ENCODE measurements at regions of chr1 and their contacts with region 1.

Region 1: GRCh38 chr1:3146907-3147306 is 77.9 kb downstream of the PRDM16 start:
- DNase-seq: no peak
- H3K4me3 ChIP-seq: no peak overlapping the region
- H3K27ac ChIP-seq: no peak overlapping the region
- H3K27me3 ChIP-seq: peaks cover 0 to 54% (median 4%) of the 10 kb centered on the region in 45 donors
- CTCF ChIP-seq: no peak

Region 2: DNA sequence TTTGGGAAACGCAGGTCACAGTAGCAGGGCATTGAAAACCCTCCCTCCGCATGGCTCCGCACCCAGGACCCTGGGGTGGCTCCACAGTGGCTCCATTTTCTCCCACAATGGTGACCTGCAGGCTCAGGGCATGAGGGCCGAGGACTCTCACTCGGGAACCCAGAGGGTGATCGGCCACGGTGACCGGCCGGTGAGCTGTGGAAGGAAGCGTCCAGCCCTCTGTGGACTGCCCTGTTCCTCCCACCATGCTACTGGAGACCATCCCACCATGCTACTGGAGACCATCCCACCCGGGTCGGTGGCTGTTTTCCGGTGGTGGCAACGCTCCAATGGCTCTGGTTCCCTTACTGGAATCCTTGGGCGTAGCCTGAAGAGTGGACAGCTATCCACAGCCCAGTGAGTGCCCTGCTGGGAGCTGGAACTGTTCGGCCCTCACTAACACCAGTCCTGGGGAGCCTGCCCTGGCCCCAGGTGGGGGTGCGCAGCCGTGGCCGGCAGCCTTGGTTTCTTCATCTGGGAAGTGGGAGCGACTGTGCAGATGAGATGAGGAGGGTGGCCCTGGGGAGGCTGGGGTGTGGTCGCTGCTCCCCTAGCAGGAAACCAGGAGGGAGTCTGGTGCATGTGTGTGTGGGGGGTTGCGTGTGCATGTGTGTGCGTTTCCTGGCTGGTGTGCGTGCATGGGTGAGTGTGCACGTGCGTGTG is 18.3 kb before region 1 on chr1:
- intact Hi-C with region 1: loop called in 1 of 2 experiments (anchors 1 kb)
- DNase-seq: no peak
- H3K4me3 ChIP-seq: no peak overlapping the region
- H3K27ac ChIP-seq: peak overlapping the region in 41 of 59 donors; percentile 6 to 89 (median 60)
- H3K27me3 ChIP-seq: peaks cover 0 to 14% (median 0%) of the 10 kb centered on the region in 45 donors
- CTCF ChIP-seq: no peak